K562 (cell line): ENCODE measurements at regions of chr4 and their contacts with region 1.

Region 1: DNA sequence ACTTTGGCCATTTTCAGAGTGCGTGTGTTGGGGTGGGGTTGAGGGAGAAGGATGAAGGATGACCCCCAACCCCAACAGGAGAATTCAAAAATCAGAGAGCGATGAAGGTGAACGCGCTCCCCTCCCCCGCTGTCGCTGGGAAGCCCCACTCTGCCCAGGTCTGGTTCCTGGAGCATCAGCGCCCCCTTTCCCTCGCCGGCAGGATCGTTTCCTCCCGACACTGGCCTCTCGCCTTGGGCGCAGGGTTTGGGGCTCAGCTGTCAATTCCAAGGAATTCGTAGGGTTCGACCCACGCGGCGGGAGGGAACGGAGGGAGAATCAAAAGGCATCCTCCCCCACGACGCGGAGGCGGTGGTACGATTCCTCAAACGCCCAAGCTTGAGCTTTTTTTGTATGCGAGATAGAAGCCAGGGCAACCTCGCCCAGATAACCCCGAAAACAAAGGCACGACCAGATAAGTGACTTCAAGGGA is 1.0 kb upstream of the PDGFRA start:
- DNase-seq: peak; percentile 32 to 61 (median 57)
- ATAC-seq: peak; percentile 91
- H3K4me3 ChIP-seq: no peak overlapping the region
- H3K27ac ChIP-seq: no peak overlapping the region
- H3K4me1 ChIP-seq: peaks cover 0 to 17% of the 10 kb centered on the region in 2 experiments; a peak in 2 of 5 replicates
- H3K27me3 ChIP-seq: peaks cover 31 to 72% of the 10 kb centered on the region in 2 experiments
- CTCF ChIP-seq: peak; percentile 61 to 74 (median 72)
- EP300 ChIP-seq: no peak
- POLR2A ChIP-seq: no peak
- RAD21 ChIP-seq: peak; percentile 43 to 63

Region 2: GRCh38 chr4:53706422-53707032 is 521.6 kb before region 1 on chr4:
- CTCF ChIA-PET with region 1: no interaction called
- POLR2A ChIA-PET with region 1: no interaction called
- in situ Hi-C with region 1: loop called (anchors 5 kb)
- intact Hi-C with region 1: loop called (anchors 5 kb)
- DNase-seq: peak; percentile 13 to 38 (median 20)
- ATAC-seq: peak; percentile 75
- H3K4me3 ChIP-seq: no peak overlapping the region
- H3K27ac ChIP-seq: no peak overlapping the region
- H3K4me1 ChIP-seq: no peaks in the 10 kb centered on the region; a peak in 1 of 5 replicates
- H3K27me3 ChIP-seq: peaks cover 0 to 11% of the 10 kb centered on the region in 2 experiments; a peak in 2 of 5 replicates
- CTCF ChIP-seq: peak; percentile 46 to 62 (median 61); a peak in 5 of 6 replicates
- EP300 ChIP-seq: no peak
- POLR2A ChIP-seq: no peak
- RAD21 ChIP-seq: peak; percentile 30 to 53

Region 3: GRCh38 chr4:53908661-53909078 is 319.4 kb before region 1 on chr4:
- CTCF ChIA-PET with region 1: no interaction called
- POLR2A ChIA-PET with region 1: no interaction called
- in situ Hi-C with region 1: loop called (anchors 5 kb)
- intact Hi-C with region 1: no loop called
- DNase-seq: peak; percentile 16 to 67 (median 38)
- ATAC-seq: peak; percentile 94
- H3K4me3 ChIP-seq: no peak overlapping the region
- H3K27ac ChIP-seq: no peak overlapping the region
- H3K4me1 ChIP-seq: peaks cover 0 to 5% of the 10 kb centered on the region in 2 experiments; a peak in 1 of 5 replicates
- H3K27me3 ChIP-seq: peaks cover 2 to 10% of the 10 kb centered on the region in 2 experiments; a peak in 4 of 5 replicates
- CTCF ChIP-seq: peak; percentile 71 to 86 (median 81)
- EP300 ChIP-seq: peak; percentile 37; the same call in 1 of the 2 replicates
- POLR2A ChIP-seq: no peak
- RAD21 ChIP-seq: peak; percentile 86

Region 4: DNA sequence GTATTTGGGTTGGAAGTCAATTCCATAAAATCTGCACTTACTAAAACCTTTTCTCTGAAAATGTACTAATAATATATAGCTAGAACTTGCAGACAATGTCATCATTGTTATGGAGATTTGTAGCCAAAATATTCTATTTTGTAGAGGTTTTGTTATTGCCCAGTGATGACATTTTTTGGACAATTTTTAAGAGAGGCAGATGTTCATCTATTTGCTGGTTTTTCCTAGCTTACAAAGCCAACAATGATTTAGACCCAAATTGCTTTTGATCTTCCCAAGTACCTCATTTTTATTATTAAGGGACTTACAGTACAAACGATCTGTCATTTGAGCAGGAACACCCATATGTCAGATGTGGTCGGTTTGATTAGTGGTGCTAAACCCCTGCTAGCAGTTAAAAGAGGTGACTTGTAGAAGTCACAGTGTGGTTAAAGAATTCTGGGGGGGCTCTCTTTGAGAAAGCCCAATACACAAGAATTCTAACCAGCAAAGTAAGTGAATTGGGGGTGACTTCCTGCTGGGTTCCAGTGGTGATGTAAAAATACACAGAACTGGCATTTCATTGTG is 565.8 kb after region 1 on chr4:
- CTCF ChIA-PET with region 1: no interaction called
- POLR2A ChIA-PET with region 1: no interaction called
- in situ Hi-C with region 1: no loop called
- intact Hi-C with region 1: no loop called
- DNase-seq: no peak
- ATAC-seq: no peak
- H3K4me3 ChIP-seq: no peak overlapping the region
- H3K27ac ChIP-seq: no peak overlapping the region
- H3K4me1 ChIP-seq: no peaks in the 10 kb centered on the region
- H3K27me3 ChIP-seq: no peaks in the 10 kb centered on the region
- CTCF ChIP-seq: no peak
- EP300 ChIP-seq: no peak
- POLR2A ChIP-seq: no peak
- RAD21 ChIP-seq: no peak